Panc1 (cell line): ENCODE measurements at regions of chr7 and their contacts with region 1.

Region 1: DNA sequence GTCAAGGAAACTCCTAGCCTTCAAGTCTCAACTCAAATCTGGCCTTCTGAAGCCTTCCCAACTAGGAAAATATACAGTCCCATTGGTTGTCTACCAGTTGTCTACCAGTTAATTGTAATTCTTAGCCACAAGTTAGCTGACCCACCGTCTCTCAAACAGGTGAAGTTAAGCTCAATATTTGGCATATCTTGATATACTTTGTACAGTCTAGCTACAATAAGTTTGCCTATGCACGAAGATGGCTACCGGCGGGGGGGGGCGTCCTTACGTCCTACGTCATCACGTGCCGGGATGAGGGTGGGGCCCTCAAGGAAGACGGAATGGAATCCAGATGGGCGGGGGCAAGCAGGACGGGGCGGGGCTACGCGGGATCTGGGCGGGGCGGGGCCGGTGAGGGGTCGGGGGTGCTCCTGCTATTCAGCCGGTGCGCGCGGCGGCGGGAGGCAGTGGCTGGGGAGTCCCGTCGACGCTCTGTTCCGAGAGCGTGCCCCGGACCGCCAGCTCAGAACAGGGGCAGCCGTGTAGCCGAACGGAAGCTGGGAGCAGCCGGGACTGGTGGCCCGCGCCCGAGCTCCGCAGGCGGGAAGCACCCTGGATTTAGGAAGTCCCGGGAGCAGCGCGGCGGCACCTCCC is at the start of gene AHR:
- DNase-seq: no peak
- ATAC-seq: peak; percentile 88
- H3K4me3 ChIP-seq: peak within 1 kb of the TSS; percentile 64 to 93
- H3K27ac ChIP-seq: peak within 1 kb of the TSS; percentile 96
- H3K4me1 ChIP-seq: peaks cover 22% of the 10 kb centered on the region
- H3K27me3 ChIP-seq: no peaks in the 10 kb centered on the region
- CTCF ChIP-seq: no peak
- total RNA-seq, gene AHR: 36.6 TPM

Region 2: DNA sequence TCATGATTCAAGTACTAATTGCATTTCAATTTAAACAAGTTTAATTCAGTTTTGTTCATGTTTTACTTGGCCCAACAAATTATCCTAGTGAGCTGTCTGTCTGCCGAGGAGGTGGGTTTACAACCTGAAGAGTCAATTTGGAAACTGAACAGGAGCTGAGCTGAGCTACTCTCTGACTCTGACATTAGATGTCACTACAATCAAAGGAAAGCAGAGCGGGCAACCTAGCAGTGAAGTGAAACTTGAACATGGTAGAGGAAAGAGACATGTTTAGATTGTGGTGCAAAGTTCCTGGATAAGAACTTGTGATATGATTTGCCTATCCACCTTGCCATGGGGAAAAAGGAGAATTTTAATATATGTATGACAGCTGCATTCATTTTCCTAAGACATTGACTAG is 407.0 kb before region 1 on chr7:
- CTCF ChIA-PET with region 1: interaction called, 5 read pairs
- POLR2A ChIA-PET with region 1: no interaction called
- in situ Hi-C with region 1: no loop called
- intact Hi-C with region 1: loop called (anchors 10 kb)
- DNase-seq: peak; percentile 65
- ATAC-seq: peak; percentile 96
- H3K4me3 ChIP-seq: no peak overlapping the region
- H3K27ac ChIP-seq: peak overlapping the region; percentile 53; the same call in 1 of the 2 replicates
- H3K4me1 ChIP-seq: peaks cover 18% of the 10 kb centered on the region
- H3K27me3 ChIP-seq: no peaks in the 10 kb centered on the region
- CTCF ChIP-seq: peak; percentile 81

Region 3: DNA sequence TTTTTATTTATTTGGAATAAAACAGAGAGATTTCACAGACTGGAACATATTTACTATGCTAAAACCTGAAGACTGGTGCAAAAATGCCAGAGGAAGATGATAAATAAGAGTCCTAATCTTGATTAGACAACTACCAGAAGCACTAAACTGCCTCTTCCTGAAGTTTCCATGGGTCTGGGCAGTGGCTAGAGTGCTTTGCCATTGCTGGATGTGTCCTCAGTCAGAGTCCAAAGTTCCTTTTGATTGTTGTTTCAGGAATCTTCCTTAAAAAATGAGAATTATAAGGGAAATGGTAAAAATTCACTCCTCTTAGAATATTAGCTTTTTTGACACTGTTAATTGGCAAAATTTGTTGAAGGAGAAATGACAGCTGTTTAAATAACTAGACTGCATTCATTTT is 86.1 kb before region 1 on chr7:
- CTCF ChIA-PET with region 1: no interaction called
- POLR2A ChIA-PET with region 1: interaction called, 11 read pairs
- in situ Hi-C with region 1: no loop called
- intact Hi-C with region 1: no loop called
- DNase-seq: no peak
- ATAC-seq: no peak
- H3K4me3 ChIP-seq: no peak overlapping the region
- H3K27ac ChIP-seq: no peak overlapping the region
- H3K4me1 ChIP-seq: no peaks in the 10 kb centered on the region
- H3K27me3 ChIP-seq: no peaks in the 10 kb centered on the region
- CTCF ChIP-seq: no peak

Region 4: DNA sequence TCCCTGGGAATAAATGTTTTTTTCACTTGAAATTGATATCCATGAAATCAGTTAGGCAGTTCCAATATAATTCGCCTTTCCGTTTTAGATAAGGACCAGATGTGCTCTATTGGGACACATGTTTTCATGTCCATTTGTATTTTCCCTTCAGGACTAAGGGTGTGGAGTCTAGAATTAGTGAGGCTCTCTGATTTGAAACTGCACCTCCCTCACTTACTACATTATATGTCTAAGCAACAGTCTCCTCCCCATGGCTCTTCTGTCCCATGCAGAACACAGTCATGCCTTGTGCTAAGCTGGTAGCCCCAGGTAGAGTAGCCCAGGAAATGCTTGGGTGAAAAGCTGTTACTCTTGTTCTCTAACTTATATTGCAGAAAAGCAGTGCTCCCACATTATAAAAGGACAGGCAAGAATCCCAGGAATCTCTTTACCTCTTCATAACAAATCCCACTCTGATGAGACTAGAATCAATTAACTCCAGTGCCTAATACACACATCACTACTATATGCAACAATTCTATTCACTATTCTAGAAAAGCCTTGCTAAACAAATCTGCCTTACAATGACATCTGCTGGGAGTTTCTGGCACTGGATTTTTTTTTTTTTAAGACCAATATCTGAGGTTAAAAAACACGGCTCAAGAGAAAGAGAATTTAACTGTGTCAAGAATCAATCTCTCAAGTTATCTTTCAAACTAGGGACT is 348.1 kb after region 1 on chr7:
- CTCF ChIA-PET with region 1: no interaction called
- POLR2A ChIA-PET with region 1: no interaction called
- in situ Hi-C with region 1: no loop called
- intact Hi-C with region 1: loop called (anchors 5 kb)
- DNase-seq: peak; percentile 69
- ATAC-seq: peak; percentile 72
- H3K4me3 ChIP-seq: no peak overlapping the region
- H3K27ac ChIP-seq: no peak overlapping the region
- H3K4me1 ChIP-seq: no peaks in the 10 kb centered on the region
- H3K27me3 ChIP-seq: no peaks in the 10 kb centered on the region
- CTCF ChIP-seq: peak; percentile 66; the same call in 1 of the 2 replicates